Head of caudate nucleus (tissue), 42 donors: ENCODE measurements at regions of chr12 and their contacts with region 1.

Region 1: GRCh38 chr12:57309420-57309819 is 58.4 kb upstream of the STAC3 start:
- DNase-seq: no peak

Region 2: DNA sequence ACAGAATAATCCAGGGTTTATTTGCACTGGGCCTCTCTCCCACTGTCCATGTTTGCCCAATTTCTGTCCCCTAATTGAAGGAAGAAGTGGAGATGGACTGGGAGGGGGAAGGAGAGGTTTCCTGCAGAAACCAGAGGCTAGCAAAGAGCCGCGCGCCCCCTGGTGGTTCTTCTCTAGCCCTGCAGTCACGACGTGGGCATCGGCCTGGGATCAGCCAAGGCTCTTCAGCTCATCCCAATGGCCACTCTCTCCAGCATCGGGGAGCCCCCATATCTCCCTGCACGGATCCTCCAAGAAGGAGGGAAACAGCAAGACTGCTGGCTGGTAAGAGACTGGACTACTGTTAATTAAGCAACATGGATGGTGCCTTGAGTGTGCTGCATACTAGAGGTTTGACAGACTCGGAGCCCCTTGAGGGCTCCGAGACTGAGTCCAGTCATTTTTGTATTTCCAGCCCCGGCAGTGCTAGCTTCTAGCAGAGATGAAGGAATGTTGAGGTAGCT is 321.8 kb before region 1 on chr12:
- intact Hi-C with region 1: no loop called
- DNase-seq: peak; percentile 69 to 94 (median 86)

Region 3: DNA sequence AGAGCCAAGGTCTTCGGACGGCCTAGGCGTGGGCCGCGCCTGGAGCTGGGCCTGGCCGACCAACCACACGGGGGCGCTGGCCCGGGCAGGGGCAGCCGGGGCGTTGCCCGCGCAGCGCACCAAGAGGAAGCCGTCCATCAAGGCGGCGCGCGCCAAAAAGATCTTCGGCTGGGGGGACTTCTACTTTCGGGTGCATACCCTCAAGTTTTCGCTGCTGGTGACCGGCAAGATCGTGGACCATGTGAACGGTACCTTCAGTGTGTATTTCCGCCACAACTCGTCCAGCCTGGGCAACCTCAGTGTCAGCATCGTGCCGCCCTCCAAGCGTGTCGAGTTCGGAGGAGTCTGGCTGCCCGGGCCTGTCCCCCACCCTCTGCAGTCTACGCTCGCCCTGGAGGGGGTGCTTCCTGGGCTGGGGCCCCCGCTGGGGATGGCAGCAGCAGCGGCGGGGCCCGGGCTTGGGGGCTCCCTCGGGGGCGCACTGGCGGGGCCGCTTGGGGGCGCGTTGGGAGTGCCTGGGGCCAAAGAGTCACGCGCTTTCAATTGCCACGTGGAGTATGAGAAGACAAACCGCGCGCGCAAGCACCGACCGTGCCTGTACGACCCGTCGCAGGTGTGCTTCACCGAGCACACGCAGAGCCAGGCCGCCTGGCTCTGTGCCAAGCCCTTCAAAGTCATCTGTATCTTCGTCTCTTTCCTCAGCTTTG is 84.3 kb before region 1 on chr12:
- intact Hi-C with region 1: no loop called
- DNase-seq: no peak

Region 4: GRCh38 chr12:57452937-57453509 is 143.6 kb after region 1 on chr12:
- intact Hi-C with region 1: loop called (anchors 5 kb)
- DNase-seq: peak; percentile 50 to 91 (median 81)

Region 5: DNA sequence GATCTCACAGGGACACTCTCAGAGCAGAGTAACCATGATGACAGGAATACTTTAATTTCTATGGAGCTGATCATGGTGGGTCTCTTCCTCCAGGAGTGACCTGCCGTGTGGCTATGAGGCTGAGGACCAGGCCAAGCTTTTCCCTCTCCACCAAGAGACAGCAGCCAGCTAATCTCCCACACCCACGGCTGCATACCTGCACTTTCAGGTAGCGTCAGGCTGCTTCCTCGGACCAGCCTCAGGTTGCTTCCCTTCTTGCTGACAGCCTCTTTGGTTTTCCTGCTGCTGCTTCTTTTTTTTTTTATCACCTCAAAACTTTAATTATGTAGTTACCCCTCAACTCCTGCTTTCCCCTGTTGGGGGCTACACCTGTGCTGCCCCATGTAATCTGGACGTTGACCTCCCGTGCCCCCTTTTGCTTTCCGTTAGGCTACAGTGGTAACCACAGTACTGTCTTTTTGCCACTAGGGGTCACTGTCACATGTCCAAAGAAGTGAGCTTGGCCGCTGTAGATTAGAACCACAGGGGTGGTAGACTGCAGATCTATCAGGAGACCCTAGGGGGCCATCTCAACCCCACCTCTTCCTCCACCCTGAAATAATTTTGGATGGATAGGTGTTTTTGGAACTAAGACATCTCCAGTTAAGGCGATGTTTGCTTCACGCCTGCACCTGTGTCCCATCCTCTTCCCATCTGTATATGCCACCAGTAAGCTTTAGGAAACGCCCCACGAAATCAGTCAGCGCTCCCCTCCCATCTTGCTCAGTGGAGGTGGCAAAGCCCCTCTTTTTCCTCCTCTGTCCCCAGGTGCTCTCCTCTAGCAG is 273.8 kb after region 1 on chr12:
- intact Hi-C with region 1: no loop called
- DNase-seq: peak in 40 of 42 donors; percentile 23 to 90 (median 74)